Activated naive CD4-positive, alpha-beta T cell treated with anti-CD3 and anti-CD28 coated beads for 36 hours (primary cell): ENCODE measurements at regions of chr6 and their contacts with region 1.

Region 1: DNA sequence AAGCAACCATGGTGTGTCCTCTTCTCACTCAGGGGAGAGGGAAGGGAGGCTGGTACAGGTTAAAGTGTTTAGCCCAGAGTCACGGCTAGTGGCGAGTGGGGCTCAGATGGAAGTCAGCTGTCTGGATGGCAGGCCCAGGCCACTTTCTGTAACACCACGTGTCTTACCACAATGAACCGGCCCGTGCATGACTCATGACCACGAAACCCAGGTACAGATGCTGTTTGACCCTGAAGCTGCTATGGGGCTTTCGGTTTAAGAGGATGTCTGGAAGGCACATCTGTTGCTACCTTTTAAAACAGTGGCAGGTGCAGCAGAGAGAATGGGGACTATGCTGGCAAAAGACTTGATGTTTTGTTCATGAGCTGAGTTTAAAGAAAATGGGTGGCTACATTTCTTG is 36.5 kb upstream of the MPC1 start:
- DNase-seq: peak; percentile 74
- H3K4me3 Mint-ChIP-seq: no peak overlapping the region
- H3K27ac Mint-ChIP-seq: peak overlapping the region; percentile 60
- H3K4me1 Mint-ChIP-seq: peaks cover 60% of the 10 kb centered on the region
- H3K27me3 Mint-ChIP-seq: no peaks in the 10 kb centered on the region

Region 2: DNA sequence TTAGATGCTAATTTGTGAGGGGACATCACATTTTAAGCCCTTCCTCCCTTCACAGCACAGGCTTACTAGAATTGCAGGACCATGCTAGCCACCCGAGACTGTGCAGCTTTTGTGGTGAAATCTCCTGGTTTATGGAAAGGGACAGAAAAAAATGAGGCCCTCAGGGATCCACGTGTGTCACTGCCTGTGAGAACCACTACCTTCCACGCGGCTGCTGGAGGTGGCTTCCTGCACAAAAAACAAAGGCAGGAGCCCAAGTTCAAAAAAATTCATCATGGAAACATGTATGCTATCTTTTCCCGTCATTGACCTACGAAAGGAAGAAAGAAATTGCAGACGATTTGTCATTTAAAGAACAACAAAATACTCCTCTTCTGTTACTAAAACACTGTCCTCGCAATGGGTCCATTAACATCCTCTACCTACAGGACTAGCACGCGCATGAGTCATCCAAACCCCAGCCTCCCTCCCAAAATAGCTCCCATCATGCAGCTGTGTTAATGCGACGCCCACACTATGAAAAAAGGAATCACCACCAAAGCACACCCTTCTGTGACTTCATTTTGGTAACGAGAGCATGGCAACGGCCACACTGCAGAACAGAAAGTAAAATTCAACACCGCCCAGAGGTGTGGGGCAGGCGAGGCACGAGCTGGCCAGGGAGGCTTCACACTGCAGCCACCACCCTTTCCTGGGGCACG is 121.5 kb after region 1 on chr6:
- CTCF ChIA-PET with region 1: no interaction called
- intact Hi-C with region 1: no loop called
- DNase-seq: peak; percentile 56
- H3K4me3 Mint-ChIP-seq: peak overlapping the region; percentile 40
- H3K27ac Mint-ChIP-seq: peak overlapping the region; percentile 6
- H3K4me1 Mint-ChIP-seq: peaks cover 32% of the 10 kb centered on the region
- H3K27me3 Mint-ChIP-seq: no peaks in the 10 kb centered on the region

Region 3: GRCh38 chr6:167706313-167707109 is 1287.2 kb after region 1 on chr6:
- CTCF ChIA-PET with region 1: no interaction called
- intact Hi-C with region 1: loop called (anchors 10 kb)
- DNase-seq: peak; percentile 81
- H3K4me3 Mint-ChIP-seq: no peak overlapping the region
- H3K27ac Mint-ChIP-seq: peak overlapping the region; percentile 16
- H3K4me1 Mint-ChIP-seq: peaks cover 29% of the 10 kb centered on the region
- H3K27me3 Mint-ChIP-seq: peaks cover 55% of the 10 kb centered on the region